GM12878 (cell line): ENCODE measurements at regions of chr17 and their contacts with region 1.

Region 1: GRCh38 chr17:8806926-8807550 is 7.9 kb upstream of the MFSD6L start:
- DNase-seq: peak; percentile 98
- ATAC-seq: peak; percentile 96
- H3K4me3 ChIP-seq: no peak overlapping the region; the same call in 1 of the 2 replicates
- H3K27ac ChIP-seq: peak overlapping the region; percentile 96
- H3K4me1 ChIP-seq: peaks cover 43% of the 10 kb centered on the region
- H3K27me3 ChIP-seq: no peaks in the 10 kb centered on the region
- CTCF ChIP-seq: no peak
- EP300 ChIP-seq: peak; percentile 56 to 62; a peak in 3 of 4 replicates
- POLR2A ChIP-seq: peak; percentile 71
- RAD21 ChIP-seq: no peak

Region 2: GRCh38 chr17:8785547-8786413 is 21.3 kb before region 1 on chr17:
- CTCF ChIA-PET with region 1: interaction called, 12 read pairs
- POLR2A ChIA-PET with region 1: no interaction called
- RAD21 ChIA-PET with region 1: interaction called, 3 read pairs
- SMC1A ChIA-PET with region 1: interaction called, 8 read pairs
- in situ Hi-C with region 1: no loop called
- intact Hi-C with region 1: no loop called
- DNase-seq: no peak
- ATAC-seq: peak; percentile 89
- H3K4me3 ChIP-seq: no peak overlapping the region
- H3K27ac ChIP-seq: no peak overlapping the region
- H3K4me1 ChIP-seq: no peaks in the 10 kb centered on the region
- H3K27me3 ChIP-seq: no peaks in the 10 kb centered on the region
- CTCF ChIP-seq: peak; percentile 64 to 87 (median 84)
- EP300 ChIP-seq: no peak
- POLR2A ChIP-seq: no peak
- RAD21 ChIP-seq: peak; percentile 75

Region 3: DNA sequence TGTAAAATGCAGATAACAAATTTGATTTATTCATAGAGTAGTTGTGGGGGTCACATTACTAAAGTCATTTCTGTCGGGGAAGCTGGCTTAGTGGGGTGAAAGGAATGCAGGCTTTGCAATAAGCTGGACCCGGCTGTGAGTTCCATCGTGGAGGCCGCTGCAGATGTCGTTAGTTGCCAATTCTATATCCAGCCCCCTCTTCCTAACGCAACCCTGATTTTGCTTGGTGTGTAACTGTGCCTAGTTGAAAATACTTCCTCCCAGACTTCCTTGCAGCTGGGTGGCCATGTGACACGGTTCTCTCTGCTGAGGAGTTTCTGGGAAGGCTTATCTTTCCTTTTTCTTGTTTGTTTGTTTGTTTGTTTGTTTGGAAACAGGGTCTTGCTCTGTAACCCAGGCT is 12.4 kb before region 1 on chr17:
- CTCF ChIA-PET with region 1: no interaction called
- POLR2A ChIA-PET with region 1: interaction called, 3 read pairs
- RAD21 ChIA-PET with region 1: interaction called, 9 read pairs
- SMC1A ChIA-PET with region 1: interaction called, 10 read pairs
- in situ Hi-C with region 1: no loop called
- intact Hi-C with region 1: no loop called
- DNase-seq: no peak
- ATAC-seq: no peak
- H3K4me3 ChIP-seq: no peak overlapping the region
- H3K27ac ChIP-seq: no peak overlapping the region
- H3K4me1 ChIP-seq: no peaks in the 10 kb centered on the region
- H3K27me3 ChIP-seq: no peaks in the 10 kb centered on the region
- CTCF ChIP-seq: no peak
- EP300 ChIP-seq: no peak
- POLR2A ChIP-seq: no peak
- RAD21 ChIP-seq: no peak

Region 4: DNA sequence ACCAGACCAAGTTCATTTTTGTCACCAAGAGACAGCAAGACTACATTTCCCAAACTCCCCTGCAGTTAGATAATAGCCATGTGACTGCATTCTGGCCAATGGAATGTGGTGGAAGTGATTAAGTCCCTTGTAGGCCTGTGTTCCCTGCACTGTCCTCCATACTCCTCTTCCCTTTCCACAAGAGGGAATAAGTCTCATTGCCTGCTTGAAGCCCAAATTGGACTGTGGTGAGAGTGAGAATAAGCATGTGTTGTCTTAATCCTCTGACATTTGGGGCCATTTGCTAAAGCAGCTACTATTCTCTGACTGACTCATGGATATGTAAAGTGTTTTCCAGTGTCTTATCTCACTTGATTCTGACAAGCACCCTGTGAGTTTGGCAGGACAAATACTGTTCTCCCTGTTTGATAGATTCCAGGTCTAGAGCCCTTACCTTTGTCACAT is 39.8 kb after region 1 on chr17:
- CTCF ChIA-PET with region 1: interaction called, 13 read pairs
- POLR2A ChIA-PET with region 1: interaction called, 35 read pairs
- RAD21 ChIA-PET with region 1: interaction called, 26 read pairs
- SMC1A ChIA-PET with region 1: interaction called, 26 read pairs
- in situ Hi-C with region 1: no loop called
- intact Hi-C with region 1: no loop called
- DNase-seq: no peak
- ATAC-seq: peak; percentile 65
- H3K4me3 ChIP-seq: no peak overlapping the region
- H3K27ac ChIP-seq: peak overlapping the region; percentile 42
- H3K4me1 ChIP-seq: peaks cover 42% of the 10 kb centered on the region
- H3K27me3 ChIP-seq: no peaks in the 10 kb centered on the region
- CTCF ChIP-seq: no peak
- EP300 ChIP-seq: no peak
- POLR2A ChIP-seq: no peak
- RAD21 ChIP-seq: no peak

Region 5: DNA sequence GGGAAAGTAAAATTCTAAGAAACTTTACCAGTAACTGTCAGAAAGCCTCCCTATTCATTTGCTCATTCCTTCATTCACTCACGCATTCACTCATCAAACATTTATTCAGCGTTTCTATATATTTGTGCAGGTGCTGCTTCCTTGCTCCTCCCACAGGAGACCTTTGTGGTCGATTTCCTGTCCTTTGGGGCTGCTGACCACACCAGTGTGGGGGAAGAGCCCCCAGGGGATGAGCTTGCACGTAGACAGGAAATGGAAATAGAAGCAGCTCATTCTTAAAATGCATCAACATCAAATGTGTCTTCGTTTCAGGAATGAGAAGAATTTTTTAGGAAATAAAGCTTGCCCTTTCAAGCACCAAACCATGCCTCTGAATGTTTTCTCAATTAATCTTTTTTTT is 50.9 kb after region 1 on chr17:
- CTCF ChIA-PET with region 1: interaction called, 4 read pairs
- POLR2A ChIA-PET with region 1: interaction called, 32 read pairs
- RAD21 ChIA-PET with region 1: interaction called, 17 read pairs
- SMC1A ChIA-PET with region 1: interaction called, 35 read pairs
- in situ Hi-C with region 1: no loop called
- intact Hi-C with region 1: loop called (anchors 2 kb)
- DNase-seq: peak; percentile 95
- ATAC-seq: peak; percentile 40
- H3K4me3 ChIP-seq: peak overlapping the region; percentile 57; the same call in 1 of the 2 replicates
- H3K27ac ChIP-seq: peak overlapping the region; percentile 99
- H3K4me1 ChIP-seq: peaks cover 60% of the 10 kb centered on the region
- H3K27me3 ChIP-seq: no peaks in the 10 kb centered on the region
- CTCF ChIP-seq: no peak
- EP300 ChIP-seq: peak; percentile 98 to 99
- POLR2A ChIP-seq: no peak
- RAD21 ChIP-seq: peak; percentile 12; the same call in 1 of the 2 replicates

Region 6: GRCh38 chr17:8867361-8867981 is 60.4 kb after region 1 on chr17 and contains the start of gene PIK3R6:
- CTCF ChIA-PET with region 1: interaction called, 10 read pairs
- POLR2A ChIA-PET with region 1: interaction called, 9 read pairs
- RAD21 ChIA-PET with region 1: interaction called, 13 read pairs
- SMC1A ChIA-PET with region 1: interaction called, 19 read pairs
- in situ Hi-C with region 1: no loop called
- intact Hi-C with region 1: no loop called
- DNase-seq: no peak
- ATAC-seq: peak; percentile 65
- H3K4me3 ChIP-seq: peak within 1 kb of the TSS; percentile 99
- H3K27ac ChIP-seq: peak within 1 kb of the TSS; percentile 88
- H3K4me1 ChIP-seq: peaks cover 25% of the 10 kb centered on the region
- H3K27me3 ChIP-seq: no peaks in the 10 kb centered on the region
- CTCF ChIP-seq: no peak
- EP300 ChIP-seq: no peak
- POLR2A ChIP-seq: peak; percentile 83
- RAD21 ChIP-seq: no peak
- polyA plus RNA-seq, gene PIK3R6: 6.7 to 7.4 TPM

Region 7: DNA sequence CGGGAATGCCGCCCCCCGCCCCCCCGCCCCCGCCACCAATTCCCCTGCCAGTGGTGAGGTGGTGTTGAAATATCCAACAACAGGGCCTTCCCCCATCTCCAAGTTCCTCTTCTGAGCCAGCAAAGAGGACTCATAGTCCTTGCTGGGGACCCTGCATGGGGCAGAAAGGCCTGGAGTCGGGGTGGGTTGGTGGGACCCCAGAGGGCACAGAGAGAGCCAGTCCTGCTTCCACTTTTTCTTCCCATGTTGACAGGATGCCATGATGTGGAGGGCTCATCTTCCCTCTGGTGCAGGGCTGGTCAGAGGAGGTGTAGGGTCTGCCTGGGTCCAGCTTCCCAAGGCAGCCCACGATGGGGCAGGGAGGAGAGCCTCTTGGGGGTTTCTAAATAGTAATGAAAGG is 109.4 kb after region 1 on chr17:
- CTCF ChIA-PET with region 1: no interaction called
- POLR2A ChIA-PET with region 1: no interaction called
- RAD21 ChIA-PET with region 1: no interaction called
- SMC1A ChIA-PET with region 1: no interaction called
- in situ Hi-C with region 1: no loop called
- intact Hi-C with region 1: no loop called
- DNase-seq: no peak
- ATAC-seq: no peak
- H3K4me3 ChIP-seq: no peak overlapping the region
- H3K27ac ChIP-seq: no peak overlapping the region
- H3K4me1 ChIP-seq: peaks cover 49% of the 10 kb centered on the region
- H3K27me3 ChIP-seq: no peaks in the 10 kb centered on the region
- CTCF ChIP-seq: no peak
- EP300 ChIP-seq: no peak
- POLR2A ChIP-seq: no peak
- RAD21 ChIP-seq: no peak

Region 8: DNA sequence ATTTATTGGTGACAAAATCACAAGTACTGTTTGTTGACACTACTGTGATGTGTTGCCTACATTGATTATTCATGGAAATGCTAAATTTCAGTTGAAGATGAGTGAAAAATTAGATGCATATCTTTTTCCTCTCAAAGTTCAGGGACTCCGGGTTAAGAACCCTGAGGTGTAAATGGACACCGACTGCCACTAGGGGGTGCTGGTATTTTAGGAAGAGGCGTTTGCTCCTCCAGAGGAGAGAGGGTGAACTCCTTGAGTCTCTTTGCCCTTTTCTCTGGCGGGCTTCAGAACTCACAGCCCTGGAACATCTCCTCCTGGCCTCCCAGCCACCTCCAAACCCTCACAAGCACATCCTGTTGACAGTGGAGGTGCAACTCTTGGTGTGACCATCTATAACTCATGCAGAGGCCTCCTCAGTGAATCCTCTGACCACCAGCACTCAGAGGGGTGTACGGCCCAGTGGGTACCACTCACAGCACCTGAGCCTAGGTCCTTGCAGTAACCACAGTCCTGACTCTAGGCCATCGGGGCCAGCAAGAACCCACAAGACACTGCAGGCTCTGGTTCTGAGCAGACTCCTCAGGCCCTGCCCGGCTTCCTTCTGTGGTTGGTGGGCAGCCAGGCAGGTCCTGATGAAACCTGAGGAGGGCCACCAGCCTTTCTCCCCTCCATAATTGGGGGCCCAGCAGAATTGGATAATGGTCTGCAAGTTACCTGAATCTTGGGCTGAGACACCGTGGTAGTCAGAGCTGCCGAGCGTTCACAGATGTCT is 184.7 kb after region 1 on chr17:
- CTCF ChIA-PET with region 1: no interaction called
- POLR2A ChIA-PET with region 1: no interaction called
- RAD21 ChIA-PET with region 1: interaction called, 5 read pairs
- SMC1A ChIA-PET with region 1: interaction called, 4 read pairs
- in situ Hi-C with region 1: no loop called
- intact Hi-C with region 1: loop called (anchors 10 kb)
- DNase-seq: no peak
- ATAC-seq: peak; percentile 74
- H3K4me3 ChIP-seq: no peak overlapping the region
- H3K27ac ChIP-seq: no peak overlapping the region
- H3K4me1 ChIP-seq: peaks cover 12% of the 10 kb centered on the region
- H3K27me3 ChIP-seq: no peaks in the 10 kb centered on the region
- CTCF ChIP-seq: peak; percentile 38 to 77 (median 71)
- EP300 ChIP-seq: no peak
- POLR2A ChIP-seq: no peak
- RAD21 ChIP-seq: peak; percentile 57